T-cell (primary cell): ENCODE measurements at regions of chr2 and their contacts with region 1.

Region 1: DNA sequence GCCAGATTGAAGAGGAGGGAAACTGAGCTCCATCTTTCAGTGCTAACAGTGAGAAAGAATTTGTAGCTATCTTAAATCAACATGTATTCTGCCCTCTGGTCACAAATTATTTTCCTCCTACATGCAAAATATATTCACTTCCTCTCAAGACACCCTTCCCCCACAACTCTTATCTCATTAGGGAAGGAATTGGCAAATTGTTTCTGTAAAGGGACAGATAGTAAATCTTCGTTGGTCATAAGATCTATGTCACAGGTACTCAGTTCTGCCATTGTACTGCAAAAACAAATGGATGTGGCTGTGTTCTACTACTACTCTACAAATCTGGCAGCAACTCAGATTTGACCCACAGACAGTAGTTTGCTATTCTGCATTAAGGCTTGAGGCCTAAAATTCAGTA is 53.0 kb upstream of the CYP20A1 start:
- DNase-seq: no peak
- ATAC-seq: no peak
- H3K4me3 ChIP-seq: no peak overlapping the region
- H3K4me3 Mint-ChIP-seq: no peak overlapping the region
- H3K27ac ChIP-seq: no peak overlapping the region
- H3K27ac Mint-ChIP-seq: no peak overlapping the region
- H3K4me1 ChIP-seq: no peaks in the 10 kb centered on the region
- H3K4me1 Mint-ChIP-seq: no peaks in the 10 kb centered on the region
- H3K27me3 ChIP-seq: no peaks in the 10 kb centered on the region
- H3K27me3 Mint-ChIP-seq: no peaks in the 10 kb centered on the region

Region 2: GRCh38 chr2:203126996-203127395 is 58.9 kb before region 1 on chr2:
- CTCF ChIA-PET with region 1: no interaction called
- POLR2A ChIA-PET with region 1: no interaction called
- DNase-seq: no peak
- ATAC-seq: no peak
- H3K4me3 ChIP-seq: no peak overlapping the region
- H3K4me3 Mint-ChIP-seq: no peak overlapping the region
- H3K27ac ChIP-seq: no peak overlapping the region
- H3K27ac Mint-ChIP-seq: no peak overlapping the region
- H3K4me1 ChIP-seq: no peaks in the 10 kb centered on the region
- H3K4me1 Mint-ChIP-seq: no peaks in the 10 kb centered on the region
- H3K27me3 ChIP-seq: no peaks in the 10 kb centered on the region
- H3K27me3 Mint-ChIP-seq: no peaks in the 10 kb centered on the region

Region 3: GRCh38 chr2:203242518-203242917 is 56.7 kb after region 1 on chr2:
- CTCF ChIA-PET with region 1: no interaction called
- POLR2A ChIA-PET with region 1: interaction called in 1 of 2 experiments, 13 read pairs
- DNase-seq: no peak
- ATAC-seq: no peak
- H3K4me3 ChIP-seq: no peak overlapping the region
- H3K4me3 Mint-ChIP-seq: no peak overlapping the region
- H3K27ac ChIP-seq: no peak overlapping the region
- H3K27ac Mint-ChIP-seq: no peak overlapping the region
- H3K4me1 ChIP-seq: peaks cover 13 to 22% of the 10 kb centered on the region in 2 experiments
- H3K4me1 Mint-ChIP-seq: peaks cover 37 to 56% (median 48%) of the 10 kb centered on the region in 3 donors
- H3K27me3 ChIP-seq: no peaks in the 10 kb centered on the region
- H3K27me3 Mint-ChIP-seq: no peaks in the 10 kb centered on the region

Region 4: GRCh38 chr2:203376173-203376572 is 190.3 kb after region 1 on chr2:
- CTCF ChIA-PET with region 1: no interaction called
- POLR2A ChIA-PET with region 1: no interaction called
- DNase-seq: peak in 1 of 35 experiments; percentile 11
- ATAC-seq: no peak
- H3K4me3 ChIP-seq: no peak overlapping the region
- H3K4me3 Mint-ChIP-seq: no peak overlapping the region
- H3K27ac ChIP-seq: no peak overlapping the region
- H3K27ac Mint-ChIP-seq: no peak overlapping the region
- H3K4me1 ChIP-seq: no peaks in the 10 kb centered on the region
- H3K4me1 Mint-ChIP-seq: peaks cover 0 to 6% (median 5%) of the 10 kb centered on the region in 3 donors
- H3K27me3 ChIP-seq: no peaks in the 10 kb centered on the region
- H3K27me3 Mint-ChIP-seq: no peaks in the 10 kb centered on the region